ENCODE measurements at regions of chr16 and their contacts with region 1.

Region 1: GRCh38 chr16:74320707-74321106 is 24.1 kb downstream of the PSMD7 start:
- DNase-seq: no peak
- H3K4me3 ChIP-seq: no peak overlapping the region
- CTCF ChIP-seq: no peak

Region 2: GRCh38 chr16:74304164-74304834 is 16.4 kb before region 1 on chr16:
- CTCF ChIA-PET with region 1: interaction called, 10 read pairs
- POLR2A ChIA-PET with region 1: no interaction called
- DNase-seq: no peak
- H3K4me3 ChIP-seq: no peak overlapping the region
- CTCF ChIP-seq: peak; percentile 29

Region 3: DNA sequence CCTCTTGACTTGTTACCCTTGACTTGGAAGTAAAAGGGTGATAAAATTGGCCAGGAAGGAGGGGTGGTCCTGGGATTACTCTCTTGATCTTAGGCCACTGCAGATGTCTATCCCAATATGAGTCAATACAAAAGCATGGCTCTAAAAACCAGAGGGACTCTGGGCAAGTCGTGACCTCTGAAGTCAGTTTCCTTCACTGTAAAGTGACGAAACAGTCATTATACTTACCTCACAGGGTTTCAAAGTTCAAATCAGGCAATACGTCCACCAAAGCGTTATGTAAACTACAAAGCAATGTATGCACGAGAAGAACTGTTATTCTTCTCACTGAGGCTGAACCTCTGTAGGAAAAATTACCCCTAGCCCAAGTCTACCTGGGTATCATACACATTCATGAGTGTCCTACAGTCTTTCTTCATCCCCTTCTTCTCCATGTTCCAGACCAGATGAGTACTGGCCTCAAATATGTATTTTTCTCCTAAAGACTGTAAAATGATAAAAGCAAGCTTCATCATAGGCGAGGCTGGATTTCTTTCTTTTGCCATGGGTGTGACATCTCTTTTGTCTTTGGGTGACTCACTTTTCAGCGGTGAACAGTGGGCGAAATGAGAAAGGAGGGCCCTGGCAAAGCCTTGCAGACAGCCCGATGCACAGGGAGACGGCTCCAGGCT is 135.0 kb after region 1 on chr16:
- CTCF ChIA-PET with region 1: no interaction called
- POLR2A ChIA-PET with region 1: no interaction called
- DNase-seq: no peak
- H3K4me3 ChIP-seq: no peak overlapping the region
- CTCF ChIP-seq: no peak